ENCODE measurements at regions of chr2 and their contacts with region 1.

Region 1: DNA sequence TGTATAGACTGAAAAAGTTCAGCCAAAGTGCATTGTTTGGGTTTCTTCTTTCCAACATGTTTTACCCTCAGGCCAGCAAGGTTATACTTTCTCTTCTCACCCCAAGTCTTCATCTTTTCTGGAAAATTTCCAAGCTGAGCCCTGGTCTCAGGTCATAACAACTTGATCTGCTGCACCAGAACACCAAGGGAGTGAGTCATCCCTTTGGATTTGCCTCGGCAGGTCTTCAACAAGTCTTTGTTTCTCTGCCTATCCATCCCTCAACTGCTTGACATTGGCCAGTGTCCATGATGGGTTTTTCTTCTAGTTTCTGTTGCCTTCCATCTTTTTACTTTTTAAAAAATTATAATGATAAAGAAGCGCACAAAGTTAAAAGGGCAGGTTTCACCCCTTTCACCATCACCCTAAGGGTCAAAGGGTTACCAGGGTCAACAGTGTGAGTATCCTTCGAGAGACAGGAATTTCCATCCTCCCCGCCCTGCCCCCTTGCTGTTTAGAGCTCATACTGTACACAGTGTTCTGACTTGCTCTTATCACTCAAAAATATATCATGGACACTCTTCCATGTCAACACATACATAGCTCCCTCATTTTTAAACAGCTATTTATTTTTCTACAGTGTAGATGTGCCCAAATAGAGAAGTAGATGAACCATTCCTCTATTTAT is 5.7 kb upstream of the SPATS2L start:
- DNase-seq: peak; percentile 98
- H3K4me3 ChIP-seq: peak overlapping the region in 2 of 3 experiments; percentile 28 to 47
- H3K27ac ChIP-seq: peak overlapping the region; percentile 88
- H3K4me1 ChIP-seq: peaks cover 49% of the 10 kb centered on the region
- H3K27me3 ChIP-seq: no peaks in the 10 kb centered on the region
- CTCF ChIP-seq: peak in 1 of 2 donors; percentile 31

Region 2: DNA sequence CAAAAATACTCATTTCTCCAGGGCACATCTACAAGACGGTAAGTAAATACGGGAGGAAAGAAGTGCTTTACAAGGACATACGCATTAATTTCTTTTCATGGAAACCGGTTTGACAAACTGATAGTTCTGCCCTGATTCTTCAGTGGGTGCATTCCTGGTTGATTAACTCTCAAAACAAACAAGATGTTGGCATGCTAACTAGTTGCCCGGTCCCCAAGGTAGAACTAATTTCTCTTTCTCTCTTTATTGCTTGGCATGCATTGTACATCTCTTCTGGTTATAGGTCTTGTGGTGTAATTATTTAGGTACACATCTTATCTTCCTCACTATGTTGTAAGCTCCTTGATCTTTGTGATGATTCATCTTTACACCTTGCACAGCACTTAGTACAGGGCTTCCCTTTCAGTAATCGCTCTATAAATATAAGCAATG is 41.2 kb before region 1 on chr2:
- CTCF ChIA-PET with region 1: interaction called, 4 read pairs
- dilution Hi-C with region 1: no loop called
- in situ Hi-C with region 1: no loop called
- intact Hi-C with region 1: loop called (anchors 2 kb)
- DNase-seq: peak; percentile 86
- H3K4me3 ChIP-seq: no peak overlapping the region
- H3K27ac ChIP-seq: peak overlapping the region; percentile 44
- H3K4me1 ChIP-seq: peaks cover 16% of the 10 kb centered on the region
- H3K27me3 ChIP-seq: no peaks in the 10 kb centered on the region
- CTCF ChIP-seq: no peak

Region 3: GRCh38 chr2:200279857-200280256 is 20.9 kb before region 1 on chr2:
- CTCF ChIA-PET with region 1: no interaction called
- dilution Hi-C with region 1: no loop called
- in situ Hi-C with region 1: no loop called
- intact Hi-C with region 1: loop called (anchors 2 kb)
- DNase-seq: no peak
- H3K4me3 ChIP-seq: no peak overlapping the region
- H3K27ac ChIP-seq: no peak overlapping the region
- H3K4me1 ChIP-seq: peaks cover 27% of the 10 kb centered on the region
- H3K27me3 ChIP-seq: no peaks in the 10 kb centered on the region
- CTCF ChIP-seq: no peak